ENCODE measurements at regions of chr9 and their contacts with region 1.

Region 1: GRCh38 chr9:134449221-134449894 is 123.1 kb downstream of the RXRA start:
- DNase-seq: peak; percentile 94 to 98 (median 98)
- H3K4me3 ChIP-seq: no peak overlapping the region
- H3K27ac ChIP-seq: no peak overlapping the region
- H3K4me1 ChIP-seq: peaks cover 0 to 6% (median under 1%) of the 10 kb centered on the region in 4 experiments
- H3K27me3 ChIP-seq: no peaks in the 10 kb centered on the region

Region 2: GRCh38 chr9:134171316-134172197 is 277.8 kb before region 1 on chr9:
- CTCF ChIA-PET with region 1: interaction called, 21 read pairs
- POLR2A ChIA-PET with region 1: no interaction called
- DNase-seq: no peak
- H3K4me3 ChIP-seq: no peak overlapping the region
- H3K27ac ChIP-seq: no peak overlapping the region
- H3K4me1 ChIP-seq: peaks cover 3 to 46% (median 37%) of the 10 kb centered on the region in 4 experiments
- H3K27me3 ChIP-seq: no peaks in the 10 kb centered on the region

Region 3: GRCh38 chr9:134434894-134435506 is 14.4 kb before region 1 on chr9:
- CTCF ChIA-PET with region 1: no interaction called
- POLR2A ChIA-PET with region 1: no interaction called
- DNase-seq: peak; percentile 64 to 73 (median 69)
- H3K4me3 ChIP-seq: peak overlapping the region in 2 of 7 experiments; percentile 14 to 37
- H3K27ac ChIP-seq: no peak overlapping the region
- H3K4me1 ChIP-seq: peaks cover 0 to 26% (median 13%) of the 10 kb centered on the region in 4 experiments
- H3K27me3 ChIP-seq: no peaks in the 10 kb centered on the region

Region 4: GRCh38 chr9:134461426-134461982 is 12.1 kb after region 1 on chr9:
- CTCF ChIA-PET with region 1: interaction called, 12 read pairs
- POLR2A ChIA-PET with region 1: no interaction called
- DNase-seq: no peak
- H3K4me3 ChIP-seq: no peak overlapping the region
- H3K27ac ChIP-seq: no peak overlapping the region
- H3K4me1 ChIP-seq: peaks cover 0 to 67% (median 52%) of the 10 kb centered on the region in 4 experiments
- H3K27me3 ChIP-seq: no peaks in the 10 kb centered on the region

Region 5: GRCh38 chr9:134559013-134559412 is 109.7 kb after region 1 on chr9:
- CTCF ChIA-PET with region 1: interaction called, 11 read pairs
- POLR2A ChIA-PET with region 1: no interaction called
- DNase-seq: peak in 2 of 3 donors; percentile 71
- H3K4me3 ChIP-seq: no peak overlapping the region
- H3K27ac ChIP-seq: no peak overlapping the region
- H3K4me1 ChIP-seq: peaks cover 0 to 27% (median 15%) of the 10 kb centered on the region in 4 experiments
- H3K27me3 ChIP-seq: no peaks in the 10 kb centered on the region

Region 6: GRCh38 chr9:134689321-134690181 is 240.2 kb after region 1 on chr9:
- CTCF ChIA-PET with region 1: interaction called, 32 read pairs
- POLR2A ChIA-PET with region 1: no interaction called
- DNase-seq: peak in 2 of 3 donors; percentile 17 to 27
- H3K4me3 ChIP-seq: no peak overlapping the region
- H3K27ac ChIP-seq: no peak overlapping the region
- H3K4me1 ChIP-seq: peaks cover 0 to 20% (median 12%) of the 10 kb centered on the region in 4 experiments
- H3K27me3 ChIP-seq: no peaks in the 10 kb centered on the region

Region 7: GRCh38 chr9:134698587-134699342 is 249.4 kb after region 1 on chr9:
- CTCF ChIA-PET with region 1: interaction called, 19 read pairs
- POLR2A ChIA-PET with region 1: no interaction called
- DNase-seq: peak; percentile 54 to 71 (median 63)
- H3K4me3 ChIP-seq: no peak overlapping the region
- H3K27ac ChIP-seq: no peak overlapping the region
- H3K4me1 ChIP-seq: peaks cover 0 to 6% (median 1%) of the 10 kb centered on the region in 4 experiments
- H3K27me3 ChIP-seq: peaks cover 0 to 5% (median 0%) of the 10 kb centered on the region in 5 experiments

Region 8: GRCh38 chr9:134738869-134739659 is 289.7 kb after region 1 on chr9:
- CTCF ChIA-PET with region 1: interaction called, 14 read pairs
- POLR2A ChIA-PET with region 1: no interaction called
- DNase-seq: peak; percentile 27 to 55 (median 44)
- H3K4me3 ChIP-seq: no peak overlapping the region
- H3K27ac ChIP-seq: no peak overlapping the region
- H3K4me1 ChIP-seq: no peaks in the 10 kb centered on the region
- H3K27me3 ChIP-seq: peaks cover 0 to 7% (median 0%) of the 10 kb centered on the region in 5 experiments

Measured in common myeloid progenitor, CD34-positive (primary cell).